ENCODE measurements at regions of chr3 and their contacts with region 1.

Region 1: DNA sequence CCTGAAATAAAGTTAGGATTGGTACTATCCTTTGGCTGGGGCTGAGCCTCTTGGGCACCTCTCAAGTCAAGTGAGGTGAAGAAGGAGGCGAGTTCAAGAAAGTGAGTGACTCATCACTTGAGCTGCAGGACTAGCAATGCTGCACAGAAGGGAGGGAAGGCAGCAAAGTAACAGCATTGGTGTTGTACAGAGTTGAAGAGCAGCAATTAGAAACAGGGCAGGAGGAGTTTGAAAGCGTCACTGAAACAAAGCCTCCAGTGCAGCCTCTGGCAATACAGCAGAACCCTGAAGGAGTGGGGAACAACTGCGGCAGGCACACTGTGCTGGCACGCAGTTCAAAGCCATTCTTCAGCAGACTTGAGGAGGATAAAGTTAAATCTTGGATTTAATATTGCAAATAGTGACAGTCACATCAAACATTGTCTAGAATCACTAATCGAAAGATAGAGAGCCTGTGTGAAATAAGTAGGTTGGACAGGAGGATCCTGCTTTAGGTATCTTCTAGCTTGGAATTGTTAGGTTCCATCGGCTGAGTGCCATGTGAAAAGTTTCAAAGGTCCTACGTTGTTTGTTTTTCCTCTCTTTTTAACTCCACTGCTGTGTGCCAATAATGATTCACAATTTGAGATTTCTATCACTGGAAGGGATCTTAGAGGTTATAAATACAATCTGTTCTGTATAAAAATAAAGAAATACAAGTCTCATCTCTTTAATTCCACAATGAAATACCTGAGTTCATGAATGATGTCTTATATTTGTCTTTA is 479.8 kb downstream of the NAALADL2 start:
- DNase-seq: peak; percentile 15
- H3K4me3 ChIP-seq: no peak overlapping the region
- H3K27ac ChIP-seq: no peak overlapping the region
- H3K27me3 ChIP-seq: no peaks in the 10 kb centered on the region
- CTCF ChIP-seq: no peak

Region 2: DNA sequence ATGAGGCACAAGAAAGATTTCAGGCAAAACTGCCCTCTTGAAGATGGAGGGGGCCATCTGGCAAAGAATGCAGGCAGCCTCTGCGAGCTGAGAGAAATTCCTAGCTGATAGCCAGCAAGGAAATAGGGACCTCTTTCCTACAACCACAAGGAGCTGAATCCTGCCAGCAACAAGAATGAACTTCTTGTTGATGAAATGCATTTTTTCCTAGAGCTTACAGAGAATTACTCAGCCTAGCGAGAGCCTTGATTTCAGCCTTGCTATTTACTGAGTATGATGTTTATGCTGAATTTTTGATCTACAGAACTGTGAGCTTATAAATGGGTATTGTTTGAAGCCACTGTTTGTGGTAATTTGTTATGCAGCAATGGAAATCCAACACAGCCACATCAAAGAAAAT is 628.3 kb before region 1 on chr3:
- CTCF ChIA-PET with region 1: interaction called, 12 read pairs
- POLR2A ChIA-PET with region 1: no interaction called
- DNase-seq: peak; percentile 4
- H3K4me3 ChIP-seq: no peak overlapping the region
- H3K27ac ChIP-seq: no peak overlapping the region
- H3K27me3 ChIP-seq: no peaks in the 10 kb centered on the region
- CTCF ChIP-seq: no peak

Region 3: GRCh38 chr3:175178816-175179454 is 160.0 kb before region 1 on chr3:
- CTCF ChIA-PET with region 1: no interaction called
- POLR2A ChIA-PET with region 1: no interaction called
- DNase-seq: no peak
- H3K4me3 ChIP-seq: no peak overlapping the region
- H3K27ac ChIP-seq: no peak overlapping the region
- H3K27me3 ChIP-seq: no peaks in the 10 kb centered on the region
- CTCF ChIP-seq: no peak

Measured in AG04450 (cell line).